HepG2 (cell line): ENCODE measurements at regions of chr11 and their contacts with region 1.

Region 1: GRCh38 chr11:95138448-95138847 is 48.8 kb downstream of the ENDOD1 start:
- DNase-seq: no peak
- ATAC-seq: peak; percentile 90
- H3K4me3 ChIP-seq: no peak overlapping the region
- H3K27ac ChIP-seq: no peak overlapping the region
- H3K4me1 ChIP-seq: no peaks in the 10 kb centered on the region
- H3K27me3 ChIP-seq: peaks cover 0 to 4% of the 10 kb centered on the region in 2 experiments; a peak in 2 of 5 replicates
- CTCF ChIP-seq: peak; percentile 37
- EP300 ChIP-seq: no peak
- POLR2A ChIP-seq: no peak
- RAD21 ChIP-seq: no peak

Region 2: GRCh38 chr11:95074806-95075563 is 63.5 kb before region 1 on chr11:
- CTCF ChIA-PET with region 1: no interaction called
- POLR2A ChIA-PET with region 1: no interaction called
- in situ Hi-C with region 1: loop called (anchors 5 kb)
- intact Hi-C with region 1: no loop called
- DNase-seq: no peak
- ATAC-seq: peak; percentile 41; the same call in 1 of the 3 replicates
- H3K4me3 ChIP-seq: no peak overlapping the region
- H3K27ac ChIP-seq: no peak overlapping the region
- H3K4me1 ChIP-seq: peaks cover 6% of the 10 kb centered on the region; the same call in 1 of the 2 replicates
- H3K27me3 ChIP-seq: no peaks in the 10 kb centered on the region; a peak in 2 of 5 replicates
- CTCF ChIP-seq: no peak
- EP300 ChIP-seq: no peak
- POLR2A ChIP-seq: no peak
- RAD21 ChIP-seq: no peak